CD4-positive, alpha-beta memory T cell (primary cell): ENCODE measurements at regions of chr14 and their contacts with region 1.

Region 1: DNA sequence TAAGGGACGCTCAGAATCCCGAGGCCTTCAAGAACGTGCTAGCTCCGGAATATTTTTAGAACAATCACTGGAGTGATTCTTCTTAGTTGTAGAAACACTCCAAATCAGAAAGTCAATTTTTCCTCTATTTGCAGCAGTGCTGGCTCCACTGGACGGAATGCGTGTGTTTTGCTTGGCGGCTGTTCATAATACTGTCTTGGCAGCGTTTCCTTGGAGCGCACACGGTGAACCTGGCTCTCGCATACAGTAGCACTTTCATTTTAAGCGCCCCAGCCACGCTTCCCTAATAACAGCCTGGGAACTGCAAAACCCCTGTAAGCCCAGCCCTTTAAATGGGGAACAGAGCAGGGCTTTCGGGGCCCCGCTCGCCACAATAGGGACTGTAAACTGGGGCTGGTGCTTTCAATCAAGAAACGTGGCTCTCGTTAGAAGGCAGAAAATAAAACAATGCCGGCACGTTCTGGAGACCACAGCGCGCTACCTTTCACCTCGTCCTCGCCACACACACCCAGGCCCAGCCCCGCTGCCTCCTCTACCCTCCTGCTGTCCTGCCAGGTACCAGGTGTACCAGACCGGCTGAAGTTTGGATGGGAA is 79.9 kb downstream of the BCL11B start:
- DNase-seq: peak in 3 of 5 donors; percentile 58 to 75 (median 62)
- H3K4me3 ChIP-seq: peak overlapping the region; percentile 48 to 75
- H3K4me3 Mint-ChIP-seq: peak overlapping the region; percentile 81 to 94 (median 88)
- H3K27ac ChIP-seq: peak overlapping the region; percentile 81
- H3K27ac Mint-ChIP-seq: peak overlapping the region; percentile 92 to 99 (median 98)
- H3K4me1 ChIP-seq: peaks cover 94% of the 10 kb centered on the region
- H3K4me1 Mint-ChIP-seq: peaks cover 80 to 97% (median 90%) of the 10 kb centered on the region in 4 donors
- H3K27me3 ChIP-seq: no peaks in the 10 kb centered on the region
- H3K27me3 Mint-ChIP-seq: no peaks in the 10 kb centered on the region

Region 2: DNA sequence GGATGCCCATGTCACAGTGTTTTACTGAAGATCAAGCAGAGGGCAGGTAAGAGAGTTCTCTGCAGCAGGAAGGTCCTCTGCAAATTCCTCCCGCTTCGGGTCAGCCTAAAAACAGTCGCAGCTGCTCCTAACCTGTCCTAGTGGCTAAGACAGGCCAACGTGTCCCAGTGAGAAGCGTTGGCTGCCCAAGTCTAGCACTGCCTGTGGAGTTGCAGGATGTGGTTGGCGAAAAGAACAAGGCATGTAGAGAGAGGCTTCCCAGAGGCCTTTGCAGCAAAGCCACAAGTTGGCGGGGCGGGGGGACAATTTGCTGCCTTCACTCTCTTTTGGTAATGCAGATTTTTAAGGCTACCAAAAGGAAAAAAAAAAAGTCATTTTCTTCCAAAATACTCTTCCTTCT is 260.2 kb before region 1 on chr14:
- CTCF ChIA-PET with region 1: no interaction called
- POLR2A ChIA-PET with region 1: interaction called, 3 read pairs
- intact Hi-C with region 1: loop called (anchors 5 kb)
- DNase-seq: peak; percentile 82 to 85 (median 84)
- H3K4me3 ChIP-seq: peak overlapping the region in 1 of 2 donors; percentile 41
- H3K4me3 Mint-ChIP-seq: peak overlapping the region; percentile 68 to 91 (median 83)
- H3K27ac ChIP-seq: peak overlapping the region; percentile 16
- H3K27ac Mint-ChIP-seq: peak overlapping the region; percentile 79 to 97 (median 91)
- H3K4me1 ChIP-seq: peaks cover 66% of the 10 kb centered on the region
- H3K4me1 Mint-ChIP-seq: peaks cover 62 to 91% (median 78%) of the 10 kb centered on the region in 4 donors
- H3K27me3 ChIP-seq: no peaks in the 10 kb centered on the region
- H3K27me3 Mint-ChIP-seq: no peaks in the 10 kb centered on the region

Region 3: DNA sequence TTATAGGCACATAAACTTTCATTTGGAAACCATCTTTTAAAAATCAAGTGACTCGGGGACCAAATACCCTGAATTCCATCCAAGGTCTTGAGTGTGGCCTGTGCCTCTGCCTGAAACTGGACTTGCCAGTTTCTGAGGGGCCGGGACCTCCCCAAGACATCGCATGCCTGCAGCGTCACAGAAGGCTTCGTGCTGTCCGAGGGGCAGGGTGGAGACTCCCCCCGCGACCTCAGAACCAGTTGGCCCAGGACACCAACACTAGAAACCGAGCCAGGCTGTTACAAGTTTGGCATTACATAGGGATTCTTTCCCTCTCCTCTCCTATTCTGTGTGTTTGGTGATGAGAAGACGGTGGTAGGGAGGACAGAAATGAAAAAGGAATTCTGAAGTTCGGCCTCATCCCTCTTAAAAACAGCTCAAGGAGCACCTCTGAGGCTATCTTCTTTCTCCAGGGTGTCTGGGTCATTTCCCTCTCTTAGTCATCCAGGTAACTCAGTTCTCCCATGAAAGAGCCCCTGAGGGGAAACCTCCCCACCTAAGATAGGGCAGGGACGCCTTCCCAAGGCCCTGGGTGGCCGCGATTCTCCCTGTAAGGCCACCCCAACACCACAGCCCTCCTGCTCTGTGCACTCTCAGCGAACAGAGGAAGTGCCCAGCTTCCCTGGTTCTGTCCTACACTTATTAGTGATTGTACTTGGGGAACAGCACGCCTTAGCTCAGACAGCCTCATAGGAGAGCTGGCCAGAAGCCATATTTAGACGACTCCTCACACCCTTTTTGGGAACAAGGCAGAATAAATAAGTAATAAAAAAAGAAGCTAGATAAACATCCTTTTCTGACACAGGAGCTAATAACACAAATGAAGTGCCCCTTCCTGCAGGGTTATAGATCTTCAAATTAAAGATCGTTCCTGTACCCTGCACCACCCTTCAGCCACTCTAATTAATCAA is 14.0 kb before region 1 on chr14:
- CTCF ChIA-PET with region 1: interaction called, 11 read pairs
- POLR2A ChIA-PET with region 1: interaction called, 22 read pairs
- intact Hi-C with region 1: no loop called
- DNase-seq: no peak
- H3K4me3 ChIP-seq: no peak overlapping the region
- H3K4me3 Mint-ChIP-seq: peak overlapping the region in 7 of 8 donors; percentile 9 to 76 (median 60)
- H3K27ac ChIP-seq: peak overlapping the region; percentile 8
- H3K27ac Mint-ChIP-seq: peak overlapping the region; percentile 88 to 96 (median 93)
- H3K4me1 ChIP-seq: peaks cover 54% of the 10 kb centered on the region
- H3K4me1 Mint-ChIP-seq: peaks cover 38 to 64% (median 48%) of the 10 kb centered on the region in 4 donors
- H3K27me3 ChIP-seq: no peaks in the 10 kb centered on the region
- H3K27me3 Mint-ChIP-seq: no peaks in the 10 kb centered on the region

Region 4: DNA sequence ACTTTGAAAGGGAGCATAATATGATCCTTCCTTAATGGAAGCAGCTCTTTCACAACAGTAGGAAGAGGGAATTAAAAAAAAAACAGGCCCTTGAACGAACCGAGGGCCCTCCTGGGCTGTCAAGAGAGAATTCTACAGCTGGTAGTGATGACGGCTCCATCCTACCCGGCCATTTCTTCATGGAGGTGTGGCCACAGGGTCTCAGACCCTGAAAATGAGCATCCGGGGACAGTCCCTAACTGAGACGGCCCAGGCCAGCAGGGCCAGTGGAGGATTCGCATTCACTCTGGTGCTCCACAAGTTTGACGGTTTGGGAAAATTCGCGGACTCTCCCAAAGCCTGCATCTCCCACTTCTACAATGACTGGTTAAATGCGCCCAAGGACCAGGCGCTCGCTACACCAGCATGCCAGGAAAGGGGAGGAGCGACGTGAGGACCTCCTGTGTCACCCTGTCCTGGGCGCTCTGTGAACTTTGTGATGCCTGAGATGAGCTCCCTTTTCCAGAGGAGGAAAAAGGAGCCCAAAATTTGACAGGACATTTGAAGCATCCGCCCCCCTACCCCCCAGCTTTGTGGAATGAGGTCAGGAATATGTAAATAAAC is 13.1 kb after region 1 on chr14:
- CTCF ChIA-PET with region 1: interaction called, 14 read pairs
- POLR2A ChIA-PET with region 1: interaction called, 79 read pairs
- intact Hi-C with region 1: loop called (anchors 1 kb)
- DNase-seq: no peak
- H3K4me3 ChIP-seq: no peak overlapping the region
- H3K4me3 Mint-ChIP-seq: peak overlapping the region; percentile 68 to 85 (median 78)
- H3K27ac ChIP-seq: peak overlapping the region; percentile 70
- H3K27ac Mint-ChIP-seq: peak overlapping the region; percentile 93 to 96 (median 94)
- H3K4me1 ChIP-seq: peaks cover 100% of the 10 kb centered on the region
- H3K4me1 Mint-ChIP-seq: peaks cover 82 to 100% (median 97%) of the 10 kb centered on the region in 4 donors
- H3K27me3 ChIP-seq: no peaks in the 10 kb centered on the region
- H3K27me3 Mint-ChIP-seq: no peaks in the 10 kb centered on the region

Region 5: DNA sequence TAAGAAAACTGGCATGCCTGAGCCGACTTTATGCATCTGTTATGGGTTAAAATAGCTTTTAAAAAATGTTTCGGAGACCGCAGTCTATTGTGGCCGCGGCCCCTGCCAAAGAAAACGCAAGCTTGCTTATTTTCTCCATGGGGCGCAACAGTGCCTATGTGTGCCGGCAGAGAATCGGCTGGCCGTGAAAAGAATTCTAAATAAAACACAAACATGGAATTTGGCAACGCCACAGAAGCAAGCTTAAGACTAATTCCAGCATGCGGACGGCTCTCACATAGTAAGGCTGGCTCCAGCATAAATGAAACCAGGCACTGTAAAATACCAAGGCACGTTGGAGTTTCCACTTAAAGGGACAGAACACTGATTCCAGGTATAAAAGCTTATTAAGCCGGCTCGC is 23.2 kb after region 1 on chr14:
- CTCF ChIA-PET with region 1: interaction called, 4 read pairs
- POLR2A ChIA-PET with region 1: interaction called, 6,015 read pairs
- intact Hi-C with region 1: loop called (anchors 2 kb)
- DNase-seq: no peak
- H3K4me3 ChIP-seq: peak overlapping the region in 1 of 2 donors; percentile 50
- H3K4me3 Mint-ChIP-seq: peak overlapping the region; percentile 82 to 90 (median 86)
- H3K27ac ChIP-seq: peak overlapping the region; percentile 53
- H3K27ac Mint-ChIP-seq: peak overlapping the region; percentile 86 to 95 (median 94)
- H3K4me1 ChIP-seq: peaks cover 97% of the 10 kb centered on the region
- H3K4me1 Mint-ChIP-seq: peaks cover 80 to 100% (median 89%) of the 10 kb centered on the region in 4 donors
- H3K27me3 ChIP-seq: no peaks in the 10 kb centered on the region
- H3K27me3 Mint-ChIP-seq: no peaks in the 10 kb centered on the region

Region 6: GRCh38 chr14:99230208-99231151 is 38.4 kb after region 1 on chr14:
- CTCF ChIA-PET with region 1: interaction called, 6 read pairs
- POLR2A ChIA-PET with region 1: interaction called, 6,015 read pairs
- intact Hi-C with region 1: loop called (anchors 1 kb)
- DNase-seq: peak; percentile 88 to 95 (median 90)
- H3K4me3 ChIP-seq: peak overlapping the region in 1 of 2 donors; percentile 13
- H3K4me3 Mint-ChIP-seq: peak overlapping the region; percentile 56 to 94 (median 80)
- H3K27ac ChIP-seq: peak overlapping the region; percentile 98
- H3K27ac Mint-ChIP-seq: peak overlapping the region; percentile 98 to 99 (median 99)
- H3K4me1 ChIP-seq: peaks cover 100% of the 10 kb centered on the region
- H3K4me1 Mint-ChIP-seq: peaks cover 78 to 98% (median 89%) of the 10 kb centered on the region in 4 donors
- H3K27me3 ChIP-seq: no peaks in the 10 kb centered on the region
- H3K27me3 Mint-ChIP-seq: no peaks in the 10 kb centered on the region